CD8-positive, alpha-beta T cell (primary cell): ENCODE measurements at regions of chr3 and their contacts with region 1.

Region 1: GRCh38 chr3:152071924-152072323 is 196.8 kb upstream of the MBNL1 start:
- DNase-seq: peak in 2 of 9 experiments; percentile 49 to 59
- ATAC-seq: peak; percentile 66
- H3K4me3 ChIP-seq: no peak overlapping the region
- H3K4me3 Mint-ChIP-seq: no peak overlapping the region
- H3K27ac ChIP-seq: no peak overlapping the region
- H3K27ac Mint-ChIP-seq: no peak overlapping the region
- H3K4me1 ChIP-seq: no peaks in the 10 kb centered on the region
- H3K4me1 Mint-ChIP-seq: no peaks in the 10 kb centered on the region
- H3K27me3 ChIP-seq: no peaks in the 10 kb centered on the region
- H3K27me3 Mint-ChIP-seq: no peaks in the 10 kb centered on the region
- CTCF ChIP-seq: peak; percentile 42

Region 2: DNA sequence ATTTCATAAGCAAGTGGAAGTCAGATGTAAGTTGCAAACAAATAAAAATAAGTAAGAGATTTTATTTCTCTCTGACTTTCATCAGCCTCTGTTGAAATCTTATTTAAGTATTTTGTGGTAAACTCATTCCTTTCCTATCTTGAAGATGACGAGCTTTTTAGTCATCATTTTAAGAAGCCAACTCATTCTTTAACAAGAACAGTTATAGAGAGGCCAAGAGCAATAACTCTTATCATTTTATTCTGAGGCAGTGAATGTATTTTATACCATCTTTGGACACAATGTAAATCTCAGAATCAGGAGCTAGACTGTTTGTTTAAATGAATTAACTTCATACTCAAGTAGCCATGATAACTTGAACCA is 49.3 kb after region 1 on chr3:
- CTCF ChIA-PET with region 1: no interaction called
- POLR2A ChIA-PET with region 1: no interaction called
- intact Hi-C with region 1: no loop called
- DNase-seq: no peak
- ATAC-seq: no peak
- H3K4me3 ChIP-seq: no peak overlapping the region
- H3K4me3 Mint-ChIP-seq: no peak overlapping the region
- H3K27ac ChIP-seq: no peak overlapping the region
- H3K27ac Mint-ChIP-seq: no peak overlapping the region
- H3K4me1 ChIP-seq: no peaks in the 10 kb centered on the region
- H3K4me1 Mint-ChIP-seq: peaks cover 6% of the 10 kb centered on the region
- H3K27me3 ChIP-seq: no peaks in the 10 kb centered on the region
- H3K27me3 Mint-ChIP-seq: no peaks in the 10 kb centered on the region
- CTCF ChIP-seq: no peak

Region 3: GRCh38 chr3:152309535-152310307 is 237.8 kb after region 1 on chr3:
- CTCF ChIA-PET with region 1: no interaction called
- POLR2A ChIA-PET with region 1: no interaction called
- intact Hi-C with region 1: loop called in 1 of 2 experiments (anchors 10 kb)
- DNase-seq: peak in 2 of 9 experiments; percentile 40 to 57
- ATAC-seq: peak; percentile 89
- H3K4me3 ChIP-seq: no peak overlapping the region
- H3K4me3 Mint-ChIP-seq: peak overlapping the region; percentile 20
- H3K27ac ChIP-seq: peak overlapping the region in 1 of 2 experiments; percentile 56
- H3K27ac Mint-ChIP-seq: peak overlapping the region; percentile 84
- H3K4me1 ChIP-seq: peaks cover 72% of the 10 kb centered on the region
- H3K4me1 Mint-ChIP-seq: peaks cover 80% of the 10 kb centered on the region
- H3K27me3 ChIP-seq: no peaks in the 10 kb centered on the region
- H3K27me3 Mint-ChIP-seq: no peaks in the 10 kb centered on the region
- CTCF ChIP-seq: no peak

Region 4: GRCh38 chr3:152322756-152323155 is 250.8 kb after region 1 on chr3:
- CTCF ChIA-PET with region 1: no interaction called
- POLR2A ChIA-PET with region 1: no interaction called
- intact Hi-C with region 1: loop called (anchors 10 kb)
- DNase-seq: peak in 2 of 9 experiments; percentile 59 to 71
- ATAC-seq: peak; percentile 24
- H3K4me3 ChIP-seq: no peak overlapping the region
- H3K4me3 Mint-ChIP-seq: peak overlapping the region; percentile 62
- H3K27ac ChIP-seq: peak overlapping the region in 1 of 2 experiments; percentile 55
- H3K27ac Mint-ChIP-seq: peak overlapping the region; percentile 78
- H3K4me1 ChIP-seq: peaks cover 77% of the 10 kb centered on the region
- H3K4me1 Mint-ChIP-seq: peaks cover 83% of the 10 kb centered on the region
- H3K27me3 ChIP-seq: no peaks in the 10 kb centered on the region
- H3K27me3 Mint-ChIP-seq: no peaks in the 10 kb centered on the region
- CTCF ChIP-seq: no peak

Region 5: GRCh38 chr3:152444029-152444641 is 372.2 kb after region 1 on chr3:
- CTCF ChIA-PET with region 1: interaction called, 3 read pairs
- POLR2A ChIA-PET with region 1: no interaction called
- intact Hi-C with region 1: loop called in 1 of 2 experiments (anchors 2 kb)
- DNase-seq: peak in 2 of 9 experiments; percentile 53 to 70
- ATAC-seq: peak; percentile 46
- H3K4me3 ChIP-seq: no peak overlapping the region
- H3K4me3 Mint-ChIP-seq: peak overlapping the region; percentile 0
- H3K27ac ChIP-seq: no peak overlapping the region
- H3K27ac Mint-ChIP-seq: peak overlapping the region; percentile 55
- H3K4me1 ChIP-seq: peaks cover 55% of the 10 kb centered on the region
- H3K4me1 Mint-ChIP-seq: peaks cover 73% of the 10 kb centered on the region
- H3K27me3 ChIP-seq: no peaks in the 10 kb centered on the region
- H3K27me3 Mint-ChIP-seq: no peaks in the 10 kb centered on the region
- CTCF ChIP-seq: peak; percentile 68

Region 6: DNA sequence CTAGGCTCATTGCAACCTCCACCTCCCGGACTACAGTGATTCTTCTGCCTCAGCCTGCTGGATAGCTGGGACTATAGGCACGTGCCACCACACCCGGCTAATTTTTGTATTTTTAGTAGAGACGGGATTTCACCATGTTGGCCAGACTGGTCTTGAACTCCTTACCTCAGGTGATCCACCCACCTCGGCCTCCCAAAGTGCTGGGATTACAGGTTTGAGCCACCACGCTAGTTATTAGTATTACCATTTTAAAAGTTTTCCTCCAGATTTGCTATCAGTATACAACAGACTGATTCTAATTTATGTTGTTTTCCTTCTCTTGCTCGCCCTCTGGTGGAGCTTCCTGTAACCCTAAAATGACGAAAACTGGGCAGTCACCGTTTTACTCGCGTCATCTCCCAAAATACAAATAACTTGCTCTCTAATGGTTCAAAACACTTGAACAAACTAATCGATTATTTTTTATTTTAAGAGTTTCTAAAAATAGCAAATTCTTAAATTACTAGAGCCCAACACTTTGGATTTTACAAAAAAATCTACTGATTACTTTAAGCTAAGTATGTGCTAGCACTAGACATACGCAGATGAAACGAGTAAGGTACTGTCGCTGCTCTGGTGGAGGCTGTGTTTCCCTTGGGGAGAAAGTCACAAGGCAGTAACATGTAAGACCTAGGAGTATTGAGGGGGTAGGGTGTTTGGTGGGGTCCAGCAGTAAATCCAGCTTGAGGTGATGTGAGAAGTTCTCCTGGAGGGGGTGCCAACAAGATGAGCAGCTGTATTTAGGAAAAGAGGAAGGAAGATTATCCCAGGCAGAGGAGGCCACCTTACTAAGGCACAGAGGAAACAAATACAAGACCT is 400.1 kb after region 1 on chr3:
- CTCF ChIA-PET with region 1: interaction called, 5 read pairs
- POLR2A ChIA-PET with region 1: no interaction called
- intact Hi-C with region 1: loop called (anchors 1 to 2 kb)
- DNase-seq: peak; percentile 48 to 85 (median 70)
- ATAC-seq: peak; percentile 90
- H3K4me3 ChIP-seq: peak overlapping the region; percentile 40
- H3K4me3 Mint-ChIP-seq: peak overlapping the region; percentile 77
- H3K27ac ChIP-seq: peak overlapping the region; percentile 11 to 59
- H3K27ac Mint-ChIP-seq: peak overlapping the region; percentile 94
- H3K4me1 ChIP-seq: peaks cover 12% of the 10 kb centered on the region
- H3K4me1 Mint-ChIP-seq: peaks cover 15% of the 10 kb centered on the region
- H3K27me3 ChIP-seq: no peaks in the 10 kb centered on the region
- H3K27me3 Mint-ChIP-seq: no peaks in the 10 kb centered on the region
- CTCF ChIP-seq: peak; percentile 84

Region 7: DNA sequence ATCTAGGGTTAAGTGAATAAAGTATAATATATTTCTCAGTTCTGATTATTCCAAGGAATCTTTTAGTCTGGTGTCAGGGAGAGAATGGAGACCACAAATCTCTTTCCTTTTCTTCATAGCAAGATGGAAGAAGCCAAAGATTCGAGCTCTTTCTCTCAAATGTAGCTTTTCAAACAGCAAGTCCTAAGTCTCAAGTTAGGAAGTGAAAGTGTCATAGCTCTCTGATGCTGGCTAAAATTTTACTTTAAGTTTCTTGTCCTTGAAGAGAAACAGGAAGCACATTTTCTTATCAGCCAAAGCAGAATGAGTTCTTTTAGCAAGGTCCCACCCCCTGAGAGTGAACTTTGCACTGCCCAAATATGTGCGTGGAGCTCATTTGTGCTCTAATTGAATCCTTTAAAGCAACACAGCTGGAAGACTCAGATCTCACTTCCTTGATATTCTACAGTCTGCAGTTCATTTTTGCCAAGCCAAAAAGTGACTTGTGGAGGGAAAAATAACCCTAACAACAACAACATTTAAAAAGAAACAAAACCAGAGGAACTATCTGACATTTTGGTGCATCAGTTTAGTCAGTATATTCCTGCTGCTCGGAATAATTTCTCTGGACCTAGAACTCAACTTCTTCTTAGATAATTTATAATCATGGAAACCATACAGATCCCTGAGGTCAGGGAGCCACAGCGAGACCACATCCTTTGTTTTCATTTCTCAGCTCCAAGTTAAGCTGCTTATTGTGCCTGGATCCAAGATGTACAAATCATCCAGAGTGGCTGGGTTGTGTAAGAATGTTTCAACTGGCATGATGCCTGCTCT is 524.3 kb after region 1 on chr3:
- CTCF ChIA-PET with region 1: no interaction called
- POLR2A ChIA-PET with region 1: no interaction called
- intact Hi-C with region 1: no loop called
- DNase-seq: peak in 2 of 9 experiments; percentile 6 to 26
- ATAC-seq: peak; percentile 34
- H3K4me3 ChIP-seq: peak overlapping the region in 1 of 2 experiments; percentile 5
- H3K4me3 Mint-ChIP-seq: peak overlapping the region; percentile 40
- H3K27ac ChIP-seq: no peak overlapping the region
- H3K27ac Mint-ChIP-seq: peak overlapping the region; percentile 86
- H3K4me1 ChIP-seq: peaks cover 12% of the 10 kb centered on the region
- H3K4me1 Mint-ChIP-seq: peaks cover 14% of the 10 kb centered on the region
- H3K27me3 ChIP-seq: no peaks in the 10 kb centered on the region
- H3K27me3 Mint-ChIP-seq: no peaks in the 10 kb centered on the region
- CTCF ChIP-seq: no peak

Region 8: GRCh38 chr3:153026026-153026425 is 954.1 kb after region 1 on chr3:
- CTCF ChIA-PET with region 1: no interaction called
- POLR2A ChIA-PET with region 1: no interaction called
- intact Hi-C with region 1: no loop called
- DNase-seq: peak in 2 of 9 experiments; percentile 42 to 56
- ATAC-seq: no peak
- H3K4me3 ChIP-seq: no peak overlapping the region
- H3K4me3 Mint-ChIP-seq: no peak overlapping the region
- H3K27ac ChIP-seq: no peak overlapping the region
- H3K27ac Mint-ChIP-seq: no peak overlapping the region
- H3K4me1 ChIP-seq: no peaks in the 10 kb centered on the region
- H3K4me1 Mint-ChIP-seq: no peaks in the 10 kb centered on the region
- H3K27me3 ChIP-seq: no peaks in the 10 kb centered on the region
- H3K27me3 Mint-ChIP-seq: peaks cover 16% of the 10 kb centered on the region
- CTCF ChIP-seq: peak; percentile 79